AG04450 (cell line): ENCODE measurements at regions of chr4 and their contacts with region 1.

Region 1: DNA sequence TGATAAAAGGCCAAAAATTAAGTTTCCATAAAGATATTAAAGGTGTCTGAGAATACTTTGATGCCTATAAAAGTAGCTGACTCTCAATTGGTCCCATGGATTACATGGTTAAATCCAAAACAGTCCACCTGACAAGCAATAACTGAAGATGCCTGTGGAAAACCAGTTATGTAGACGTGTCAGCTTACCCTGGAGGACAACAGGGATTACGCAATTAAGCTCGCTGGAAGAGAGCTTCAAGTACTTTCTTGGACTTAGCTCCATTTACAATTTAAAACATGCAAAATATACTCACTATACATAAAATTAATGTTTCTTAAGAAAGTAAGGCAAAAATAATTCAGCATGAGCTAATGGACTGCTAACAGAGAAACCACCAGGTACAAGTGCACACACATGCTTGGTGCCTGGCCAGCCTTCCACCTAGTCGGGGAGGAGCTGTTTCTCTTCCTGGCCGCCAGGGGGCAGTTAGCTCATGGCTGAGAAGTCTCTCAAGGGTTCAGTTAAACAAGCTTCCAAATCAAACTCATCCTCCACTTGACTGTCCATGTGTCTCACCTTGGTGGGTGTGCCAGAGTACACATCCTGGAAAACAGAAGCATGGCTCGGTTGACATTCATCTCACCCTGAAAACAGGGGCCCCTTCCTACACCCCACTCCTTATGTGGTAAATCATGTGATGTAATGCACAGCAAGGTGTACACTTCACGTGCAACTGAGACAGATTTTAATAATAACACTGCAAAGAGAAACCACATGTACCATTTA is 9.2 kb upstream of the FAM53A start:
- DNase-seq: peak; percentile 50
- H3K4me3 ChIP-seq: no peak overlapping the region
- H3K27ac ChIP-seq: no peak overlapping the region
- H3K27me3 ChIP-seq: no peaks in the 10 kb centered on the region
- CTCF ChIP-seq: peak; percentile 96

Region 2: DNA sequence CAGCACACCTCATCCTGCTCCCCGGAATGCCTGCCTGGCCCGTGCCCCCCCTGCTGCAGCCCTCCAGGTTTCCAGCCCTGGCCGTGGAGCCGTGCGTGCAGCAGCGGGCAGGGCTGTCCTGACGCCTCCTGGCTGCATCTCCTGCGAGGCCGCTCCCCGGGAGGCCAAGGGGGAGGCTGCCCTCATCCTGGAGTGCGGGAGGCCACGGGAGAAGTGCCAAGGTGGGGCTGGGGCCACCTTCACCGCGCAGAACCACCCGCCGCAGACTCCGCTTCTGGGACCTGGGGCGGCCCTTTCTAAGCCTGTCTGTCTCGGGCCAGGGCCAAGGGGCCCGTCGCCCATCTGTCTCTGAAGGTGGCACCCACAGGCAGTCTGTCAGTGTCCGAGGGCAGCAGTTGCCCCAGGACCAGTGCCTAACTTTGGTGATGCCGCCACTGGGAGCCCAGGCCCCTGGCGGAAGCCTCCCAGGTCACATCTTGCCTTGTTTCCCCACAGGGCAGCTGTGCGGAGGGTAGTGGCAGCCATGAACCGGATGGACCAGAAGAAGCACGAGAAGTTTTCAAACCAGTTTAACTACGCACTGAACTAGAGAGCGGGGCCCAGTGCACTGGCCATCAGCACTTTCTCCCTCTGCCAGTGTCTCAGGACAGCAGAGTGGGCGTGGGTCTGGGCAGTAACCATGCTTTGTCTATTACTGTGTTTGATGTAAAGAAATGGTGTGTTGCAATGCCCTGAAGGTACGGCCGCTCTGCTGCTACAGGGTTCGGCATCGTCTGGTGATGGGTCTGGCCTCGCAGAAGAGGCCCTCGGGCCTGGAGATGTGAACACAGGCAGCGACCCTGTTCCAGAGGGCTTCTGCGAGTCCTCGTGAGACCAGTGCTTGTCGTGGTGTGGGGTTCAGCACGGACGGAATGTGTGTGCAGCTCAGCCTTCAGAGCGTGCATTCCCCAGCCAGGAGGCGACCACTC is 307.7 kb before region 1 on chr4:
- CTCF ChIA-PET with region 1: no interaction called
- POLR2A ChIA-PET with region 1: no interaction called
- DNase-seq: no peak
- H3K4me3 ChIP-seq: no peak overlapping the region
- H3K27ac ChIP-seq: no peak overlapping the region
- H3K27me3 ChIP-seq: no peaks in the 10 kb centered on the region
- CTCF ChIP-seq: no peak

Region 3: GRCh38 chr4:1638873-1639272 is 54.4 kb before region 1 on chr4:
- CTCF ChIA-PET with region 1: no interaction called
- POLR2A ChIA-PET with region 1: no interaction called
- DNase-seq: no peak
- H3K4me3 ChIP-seq: no peak overlapping the region
- H3K27ac ChIP-seq: no peak overlapping the region
- H3K27me3 ChIP-seq: peaks cover 5% of the 10 kb centered on the region
- CTCF ChIP-seq: no peak

Region 4: DNA sequence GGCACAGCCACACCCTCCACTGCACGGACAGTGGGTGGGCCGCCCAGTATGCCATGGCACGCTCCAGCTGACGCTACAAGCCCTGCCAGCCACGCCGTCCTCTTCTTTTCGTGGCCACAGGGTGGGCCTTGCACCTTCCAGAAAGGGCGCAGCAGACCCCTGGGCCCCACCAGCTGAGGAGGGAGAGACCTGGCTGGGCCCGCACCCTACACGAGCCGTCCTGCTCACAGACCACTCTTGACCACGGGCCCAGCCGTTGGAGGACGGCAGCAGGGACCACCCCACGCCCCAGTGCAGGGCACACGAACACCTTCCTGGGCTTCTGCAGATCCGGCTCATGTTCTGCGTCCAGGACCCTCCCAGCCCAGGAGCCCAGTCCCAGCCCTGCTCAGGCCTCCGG is 36.3 kb before region 1 on chr4:
- CTCF ChIA-PET with region 1: no interaction called
- POLR2A ChIA-PET with region 1: no interaction called
- DNase-seq: no peak
- H3K4me3 ChIP-seq: no peak overlapping the region
- H3K27ac ChIP-seq: no peak overlapping the region
- H3K27me3 ChIP-seq: no peaks in the 10 kb centered on the region
- CTCF ChIP-seq: no peak

Region 5: DNA sequence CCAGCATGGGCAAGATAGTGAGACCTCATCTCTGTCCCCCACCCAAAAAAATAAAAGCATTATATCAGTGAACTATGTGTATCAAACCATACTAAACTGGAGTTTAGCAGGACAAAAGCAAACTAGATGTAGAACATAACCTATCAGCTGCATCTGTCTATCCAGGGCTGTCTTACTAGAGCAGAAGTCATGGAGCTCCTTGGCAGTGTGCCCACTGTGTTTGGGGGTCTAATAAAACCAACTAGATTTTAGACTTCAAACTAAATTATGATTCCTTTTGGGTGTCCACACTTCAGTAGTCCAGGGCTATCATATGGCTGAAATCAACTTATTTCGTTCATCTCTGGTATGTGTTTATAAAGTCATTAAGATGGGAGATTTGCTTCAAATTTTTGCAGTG is 10.6 kb after region 1 on chr4:
- CTCF ChIA-PET with region 1: interaction called, 38 read pairs
- POLR2A ChIA-PET with region 1: interaction called, 6 read pairs
- DNase-seq: no peak
- H3K4me3 ChIP-seq: no peak overlapping the region
- H3K27ac ChIP-seq: no peak overlapping the region
- H3K27me3 ChIP-seq: no peaks in the 10 kb centered on the region
- CTCF ChIP-seq: no peak

Region 6: DNA sequence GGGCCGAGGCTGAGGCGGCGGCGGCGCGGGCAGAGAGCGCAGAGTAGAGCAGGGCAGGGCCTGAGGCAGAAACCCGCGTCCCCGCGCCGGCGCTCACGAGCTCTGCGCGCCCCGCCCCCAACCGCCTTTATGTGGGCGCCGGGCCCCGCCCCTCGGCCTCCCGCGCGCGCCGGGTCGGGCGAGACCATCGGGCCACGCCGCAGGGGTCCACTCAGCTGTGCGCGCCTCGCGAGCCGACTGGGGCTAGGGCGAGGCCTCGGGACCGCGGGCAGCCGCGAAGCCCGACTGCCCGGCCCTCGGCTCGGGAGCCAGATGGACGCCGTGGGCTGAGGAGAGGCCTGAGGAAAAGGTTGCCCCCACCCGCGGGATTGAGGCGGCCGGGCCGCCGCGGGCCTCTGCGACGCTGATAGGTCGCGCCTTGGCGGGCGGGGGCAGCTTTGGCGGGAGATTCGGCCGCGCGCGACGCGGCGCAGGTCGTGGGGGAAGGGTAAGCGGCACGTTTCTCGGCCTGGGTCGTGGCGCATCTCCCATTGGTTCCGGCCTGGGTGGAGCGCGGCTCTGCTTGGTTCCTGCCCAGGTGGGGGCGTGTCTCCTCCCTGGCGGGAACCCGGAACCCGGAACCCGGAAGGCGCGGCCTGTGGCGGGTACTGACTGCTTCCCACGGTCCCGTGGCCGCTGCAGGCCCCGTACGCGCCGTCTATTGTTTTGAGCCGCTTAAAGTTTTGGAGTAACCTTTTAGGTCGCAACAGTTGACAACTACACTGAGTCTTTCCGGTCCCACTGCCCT is 19.1 kb after region 1 on chr4 and contains the start of gene SLBP:
- CTCF ChIA-PET with region 1: interaction called, 33 read pairs
- POLR2A ChIA-PET with region 1: interaction called, 11 read pairs
- DNase-seq: peak; percentile 64
- H3K4me3 ChIP-seq: peak within 1 kb of the TSS; percentile 88
- H3K27ac ChIP-seq: peak within 1 kb of the TSS; percentile 61
- H3K27me3 ChIP-seq: no peaks in the 10 kb centered on the region
- CTCF ChIP-seq: 0 out of 2 replicates have a peak, but pooled peaks have one; percentile 5
- polyA plus RNA-seq, gene SLBP: 56.3 and 72.0 TPM in 2 replicates

Region 7: GRCh38 chr4:1721004-1721665 is 27.8 kb after region 1 on chr4 and contains the starts of genes TACC3 and TMEM129:
- CTCF ChIA-PET with region 1: interaction called, 94 read pairs
- POLR2A ChIA-PET with region 1: interaction called, 3 read pairs
- DNase-seq: peak; percentile 59
- H3K4me3 ChIP-seq: peak within 1 kb of the TSS; percentile 77
- H3K27ac ChIP-seq: peak within 1 kb of the TSS; percentile 57
- H3K27me3 ChIP-seq: no peaks in the 10 kb centered on the region
- CTCF ChIP-seq: no peak
- polyA plus RNA-seq, gene TACC3: 7.0 and 8.5 TPM in 2 replicates
- polyA plus RNA-seq, gene TMEM129: 13.1 and 20.8 TPM in 2 replicates

Region 8: DNA sequence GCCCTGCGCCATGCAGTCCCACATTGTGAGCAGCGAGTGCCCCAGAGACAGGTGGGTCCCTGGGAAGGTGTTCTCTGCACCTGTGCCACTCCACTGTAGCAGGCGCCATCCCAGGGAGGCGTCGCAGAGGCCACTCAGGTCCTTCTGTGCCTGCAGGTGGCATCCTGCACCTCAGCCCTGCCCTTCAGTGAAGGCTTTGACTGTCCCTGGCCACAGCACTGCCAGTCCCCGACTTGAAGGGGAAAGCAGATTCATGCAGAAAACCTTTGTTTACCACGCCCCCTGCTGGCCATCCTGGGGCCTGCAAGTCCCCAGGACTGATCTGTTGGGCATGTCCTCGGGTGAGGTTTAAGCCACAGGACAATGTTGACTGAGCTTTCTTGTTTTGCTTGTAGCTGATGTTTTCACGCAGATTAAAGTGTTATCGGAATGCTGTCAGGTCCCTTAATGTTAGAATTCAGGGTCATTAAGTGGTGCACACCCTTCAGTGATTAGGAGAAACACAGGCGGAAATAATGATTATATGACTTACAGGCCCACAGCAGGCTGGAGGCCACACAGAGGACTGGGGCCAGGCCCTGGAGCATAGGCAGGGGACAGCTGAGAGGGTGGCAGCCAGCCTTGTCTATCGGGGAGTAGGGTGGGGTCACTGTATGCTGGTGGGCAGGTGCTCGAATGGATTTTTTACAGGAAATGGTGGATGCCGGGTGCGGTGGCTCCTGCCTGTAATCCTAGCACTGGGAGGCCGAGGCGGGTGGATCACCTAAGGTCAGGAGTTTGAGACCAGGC is 33.0 kb after region 1 on chr4:
- CTCF ChIA-PET with region 1: interaction called, 94 read pairs
- POLR2A ChIA-PET with region 1: interaction called, 4 read pairs
- DNase-seq: peak; percentile 43
- H3K4me3 ChIP-seq: no peak overlapping the region
- H3K27ac ChIP-seq: peak overlapping the region; percentile 11
- H3K27me3 ChIP-seq: no peaks in the 10 kb centered on the region
- CTCF ChIP-seq: peak; percentile 98

Region 9: DNA sequence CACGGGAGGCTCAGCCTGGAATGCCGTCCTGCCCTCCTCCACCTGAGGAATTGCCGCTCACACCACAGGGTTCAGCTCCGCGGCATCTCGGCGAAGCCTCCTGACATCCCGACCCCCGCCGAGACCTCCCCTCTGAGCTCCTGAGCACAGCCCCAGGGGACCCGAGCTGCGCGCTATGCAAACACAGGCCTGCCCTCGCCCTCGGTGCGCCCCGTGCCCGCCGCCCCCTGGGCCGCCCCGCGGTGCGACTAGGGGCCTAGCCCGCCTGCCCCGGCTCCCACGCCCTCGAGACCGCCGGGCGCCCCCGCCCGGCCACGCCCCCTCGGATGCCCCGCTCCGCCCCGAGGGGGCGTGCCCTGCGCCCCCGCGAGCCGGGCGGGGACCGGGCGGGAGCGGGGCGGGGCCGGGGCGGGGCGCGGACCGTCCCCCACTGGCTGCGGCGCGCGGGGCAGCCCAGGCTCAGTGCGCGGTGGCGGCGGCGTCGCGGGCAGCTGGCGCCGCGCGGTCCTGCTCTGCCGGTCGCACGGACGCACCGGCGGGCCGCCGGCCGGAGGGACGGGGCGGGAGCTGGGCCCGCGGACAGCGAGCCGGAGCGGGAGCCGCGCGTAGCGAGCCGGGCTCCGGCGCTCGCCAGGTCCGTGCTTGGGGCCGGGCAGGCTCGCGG is 99.7 kb after region 1 on chr4 and contains the start of gene FGFR3:
- CTCF ChIA-PET with region 1: no interaction called
- POLR2A ChIA-PET with region 1: no interaction called
- DNase-seq: no peak
- H3K4me3 ChIP-seq: peak within 1 kb of the TSS; percentile 34; the same call in 1 of the 2 replicates
- H3K27ac ChIP-seq: no peak within 1 kb of the TSS
- H3K27me3 ChIP-seq: peaks cover 45% of the 10 kb centered on the region
- CTCF ChIP-seq: no peak
- polyA plus RNA-seq, gene FGFR3: 0.06 and 0.21 TPM in 2 replicates

Region 10: DNA sequence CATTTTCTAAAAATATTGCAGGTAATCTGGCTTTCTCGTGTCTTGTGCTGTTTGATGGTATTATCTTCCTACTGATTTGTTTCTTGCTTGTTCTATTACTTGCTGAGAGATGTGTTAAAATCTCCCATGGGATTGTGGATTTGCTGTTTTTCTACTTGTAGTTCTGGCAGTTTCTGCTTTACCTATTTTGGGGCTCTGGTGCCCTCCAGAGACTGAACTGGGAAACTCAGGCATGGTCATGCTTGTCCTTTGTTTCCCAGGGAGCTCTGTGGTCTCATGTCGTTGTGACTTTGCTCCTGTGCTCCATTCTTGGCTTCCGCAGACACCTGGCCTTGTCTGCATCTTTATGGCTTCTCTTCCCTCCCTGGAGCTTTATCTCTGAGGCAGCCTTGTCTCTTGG is 217.3 kb after region 1 on chr4:
- CTCF ChIA-PET with region 1: interaction called, 11 read pairs
- POLR2A ChIA-PET with region 1: no interaction called
- DNase-seq: peak; percentile 10
- H3K4me3 ChIP-seq: no peak overlapping the region
- H3K27ac ChIP-seq: no peak overlapping the region
- H3K27me3 ChIP-seq: no peaks in the 10 kb centered on the region
- CTCF ChIP-seq: peak; percentile 87